ENCODE measurements at regions of chr17 and their contacts with region 1.

Region 1: GRCh38 chr17:33838281-33838680 is 416.8 kb upstream of the CCL2 start:
- DNase-seq: no peak
- H3K4me3 ChIP-seq: no peak overlapping the region
- H3K27ac ChIP-seq: no peak overlapping the region
- H3K4me1 ChIP-seq: no peaks in the 10 kb centered on the region
- CTCF ChIP-seq: no peak

Region 2: DNA sequence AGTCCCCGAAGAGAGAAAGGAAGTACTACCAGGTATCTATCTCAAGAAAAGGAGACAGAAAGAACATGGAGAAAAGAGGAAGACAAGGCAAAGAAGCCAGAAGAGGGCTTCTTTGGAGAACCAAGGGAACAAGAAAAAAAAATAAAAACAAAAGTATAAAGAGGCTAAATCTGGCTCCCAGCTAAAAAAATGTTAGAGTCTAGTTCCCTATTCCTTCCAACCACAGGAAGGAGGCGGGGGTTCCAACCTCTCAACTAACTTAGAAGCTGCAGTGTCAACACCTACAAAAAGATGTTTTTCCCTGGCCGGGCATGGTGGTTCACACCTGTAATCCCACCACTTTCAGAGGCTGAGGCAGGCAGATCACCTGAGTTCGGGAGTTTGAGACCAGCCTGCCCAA is 1950.2 kb before region 1 on chr17:
- CTCF ChIA-PET with region 1: no interaction called
- POLR2A ChIA-PET with region 1: interaction called, 10 read pairs
- intact Hi-C with region 1: no loop called
- DNase-seq: peak; percentile 57
- H3K4me3 ChIP-seq: no peak overlapping the region
- H3K27ac ChIP-seq: peak overlapping the region; percentile 85
- H3K4me1 ChIP-seq: peaks cover 48% of the 10 kb centered on the region
- CTCF ChIP-seq: no peak

Region 3: DNA sequence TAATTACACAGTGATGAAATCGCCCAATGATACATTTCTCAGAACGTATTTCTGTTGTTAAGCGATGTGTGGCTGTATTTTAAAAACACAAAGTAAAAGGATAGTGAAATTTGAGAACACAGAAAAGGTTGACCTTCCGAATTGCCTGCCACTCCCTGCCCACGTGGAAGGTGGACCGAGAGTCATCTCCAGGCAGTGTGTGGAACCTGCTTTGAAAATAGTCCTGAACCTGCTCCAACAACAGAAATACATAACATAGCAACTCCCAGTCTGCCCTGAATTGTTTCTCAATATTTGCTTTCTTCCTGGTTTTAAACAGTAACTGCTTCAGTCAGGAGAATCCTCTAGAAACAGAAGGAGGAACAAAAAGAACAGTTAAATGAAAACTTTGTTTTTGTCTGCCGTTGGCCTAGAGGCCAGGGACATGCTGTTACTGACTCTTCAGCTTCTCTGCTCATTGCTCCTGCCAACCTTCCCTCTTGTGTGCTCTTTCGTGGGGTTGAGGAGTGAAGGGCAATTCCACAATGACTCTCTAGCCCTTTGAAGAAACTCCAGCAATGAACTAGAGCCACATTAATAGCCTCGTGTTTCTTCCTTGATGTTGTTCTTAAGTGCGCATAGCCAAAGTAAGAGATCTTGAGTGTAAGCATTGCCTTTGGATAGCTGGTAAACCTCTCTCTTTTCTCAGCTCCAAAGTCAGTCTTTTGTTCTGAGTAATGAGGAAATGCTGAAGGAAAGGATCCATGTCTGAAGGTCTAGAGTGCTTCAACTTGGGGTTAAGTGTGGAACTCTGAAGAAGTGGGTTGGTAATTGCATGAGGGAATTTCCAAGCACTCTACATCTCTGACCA is 35.7 kb before region 1 on chr17:
- CTCF ChIA-PET with region 1: no interaction called
- POLR2A ChIA-PET with region 1: no interaction called
- intact Hi-C with region 1: no loop called
- DNase-seq: no peak
- H3K4me3 ChIP-seq: no peak overlapping the region
- H3K27ac ChIP-seq: no peak overlapping the region
- H3K4me1 ChIP-seq: no peaks in the 10 kb centered on the region
- CTCF ChIP-seq: no peak

Region 4: DNA sequence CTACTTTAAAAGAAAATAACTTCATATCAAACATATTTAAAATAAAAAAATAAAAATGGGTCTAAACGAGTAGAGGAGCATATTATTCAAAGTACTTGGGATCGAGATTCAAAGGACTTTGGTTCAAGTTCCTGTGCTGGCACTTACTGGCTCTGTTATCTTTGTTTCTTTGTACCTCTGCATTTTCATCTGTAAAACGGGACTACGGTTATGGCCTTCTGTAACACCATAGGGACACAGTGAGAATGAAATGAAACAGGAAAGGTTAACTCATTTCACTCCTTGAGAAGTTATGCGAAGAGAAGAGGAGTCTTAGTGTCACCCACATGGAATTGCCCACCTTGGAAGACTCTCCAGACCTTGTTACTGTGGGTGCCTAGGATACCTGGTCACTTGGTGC is 37.7 kb after region 1 on chr17:
- CTCF ChIA-PET with region 1: no interaction called
- POLR2A ChIA-PET with region 1: no interaction called
- intact Hi-C with region 1: no loop called
- DNase-seq: no peak
- H3K4me3 ChIP-seq: no peak overlapping the region
- H3K27ac ChIP-seq: no peak overlapping the region
- H3K4me1 ChIP-seq: no peaks in the 10 kb centered on the region
- CTCF ChIP-seq: no peak